Ovary (tissue), 10 donors: ENCODE measurements at regions of chr5 and their contacts with region 1.

Region 1: DNA sequence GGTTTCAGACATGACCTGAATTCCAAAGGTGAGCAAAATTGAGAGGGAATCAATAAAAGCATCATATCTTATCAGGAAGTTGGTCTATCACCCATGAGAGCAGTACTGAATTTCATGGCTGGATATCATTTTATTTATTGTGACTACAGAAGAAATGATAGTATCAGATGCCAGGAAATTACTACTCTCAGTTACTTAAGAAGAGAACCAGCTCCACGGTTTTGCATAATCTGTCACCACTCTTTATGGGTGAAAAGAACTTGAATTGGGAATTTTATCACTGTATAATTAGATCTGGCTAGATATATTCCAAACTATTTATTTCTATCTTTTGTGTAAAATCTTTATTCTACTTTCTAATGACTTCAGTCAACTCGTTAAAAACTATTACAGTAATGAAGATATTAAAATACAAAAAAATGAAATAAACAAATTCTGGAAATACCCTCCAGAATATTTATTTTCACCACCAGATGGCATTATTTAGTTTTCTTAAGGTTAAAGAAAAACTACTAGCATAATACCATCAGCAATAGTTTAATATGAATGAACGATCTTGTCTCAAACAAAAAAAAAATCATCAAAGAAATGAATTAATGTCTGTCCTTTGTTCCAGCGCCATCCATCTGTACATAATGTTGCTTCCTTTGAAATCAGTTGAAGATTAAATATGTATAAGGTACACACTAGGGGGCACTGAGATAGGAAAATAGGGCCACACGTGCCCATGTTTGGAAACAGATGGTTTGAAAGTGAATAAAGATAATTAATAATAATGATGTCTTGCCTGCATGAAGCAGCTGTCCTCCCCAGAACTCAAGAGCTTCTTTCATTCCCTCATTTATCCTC is 84.7 kb upstream of the SLCO6A1 start:
- DNase-seq: no peak
- H3K4me3 ChIP-seq: no peak overlapping the region
- H3K27ac ChIP-seq: no peak overlapping the region
- H3K4me1 ChIP-seq: no peaks in the 10 kb centered on the region
- H3K27me3 ChIP-seq: no peaks in the 10 kb centered on the region
- CTCF ChIP-seq: peak in 2 of 3 donors; percentile 11 to 12
- EP300 ChIP-seq: no peak
- POLR2A ChIP-seq: no peak

Region 2: DNA sequence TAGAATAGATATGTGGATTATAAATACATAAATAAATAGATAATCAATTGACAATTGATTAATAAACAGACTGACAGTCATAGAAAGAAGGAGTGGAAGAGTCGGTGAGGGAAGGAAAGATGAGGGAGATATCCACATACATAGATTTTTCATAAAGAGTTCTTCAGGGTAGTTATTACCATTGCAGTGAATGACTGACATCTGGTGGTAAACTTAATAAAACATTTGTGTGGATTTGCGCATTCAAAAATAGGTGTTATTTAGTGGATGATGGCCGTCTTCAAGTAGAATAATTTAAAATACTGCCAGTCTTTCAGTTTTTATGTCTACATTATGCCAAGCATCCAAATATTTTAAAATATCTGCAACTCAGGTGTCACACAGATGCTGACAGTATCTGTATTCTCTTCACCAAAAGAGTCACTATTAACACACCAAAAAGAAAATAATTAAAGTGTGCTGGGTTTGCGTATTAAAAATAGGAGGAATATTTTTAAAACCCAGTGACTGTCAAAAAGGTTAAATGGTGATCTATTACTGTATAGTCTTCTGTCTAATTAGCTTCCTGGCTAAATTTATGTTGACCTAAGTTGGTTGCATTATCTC is 457.7 kb after region 1 on chr5:
- intact Hi-C with region 1: loop called in 2 of 4 experiments (anchors 5 to 10 kb)
- DNase-seq: no peak
- H3K4me3 ChIP-seq: no peak overlapping the region
- H3K27ac ChIP-seq: no peak overlapping the region
- H3K4me1 ChIP-seq: no peaks in the 10 kb centered on the region
- H3K27me3 ChIP-seq: no peaks in the 10 kb centered on the region
- CTCF ChIP-seq: peak; percentile 38 to 43 (median 43)
- EP300 ChIP-seq: no peak
- POLR2A ChIP-seq: no peak